ENCODE measurements at regions of chr5 and their contacts with region 1.

Region 1: GRCh38 chr5:139446956-139447779 is 7.8 kb upstream of the DNAJC18 start:
- DNase-seq: no peak
- ATAC-seq: no peak
- H3K4me3 Mint-ChIP-seq: no peak overlapping the region
- H3K27ac Mint-ChIP-seq: peak overlapping the region in 3 of 10 donors; percentile 11 to 86 (median 27)
- H3K4me1 Mint-ChIP-seq: peaks cover 16 to 42% (median 30%) of the 10 kb centered on the region in 4 donors
- H3K27me3 Mint-ChIP-seq: no peaks in the 10 kb centered on the region

Region 2: DNA sequence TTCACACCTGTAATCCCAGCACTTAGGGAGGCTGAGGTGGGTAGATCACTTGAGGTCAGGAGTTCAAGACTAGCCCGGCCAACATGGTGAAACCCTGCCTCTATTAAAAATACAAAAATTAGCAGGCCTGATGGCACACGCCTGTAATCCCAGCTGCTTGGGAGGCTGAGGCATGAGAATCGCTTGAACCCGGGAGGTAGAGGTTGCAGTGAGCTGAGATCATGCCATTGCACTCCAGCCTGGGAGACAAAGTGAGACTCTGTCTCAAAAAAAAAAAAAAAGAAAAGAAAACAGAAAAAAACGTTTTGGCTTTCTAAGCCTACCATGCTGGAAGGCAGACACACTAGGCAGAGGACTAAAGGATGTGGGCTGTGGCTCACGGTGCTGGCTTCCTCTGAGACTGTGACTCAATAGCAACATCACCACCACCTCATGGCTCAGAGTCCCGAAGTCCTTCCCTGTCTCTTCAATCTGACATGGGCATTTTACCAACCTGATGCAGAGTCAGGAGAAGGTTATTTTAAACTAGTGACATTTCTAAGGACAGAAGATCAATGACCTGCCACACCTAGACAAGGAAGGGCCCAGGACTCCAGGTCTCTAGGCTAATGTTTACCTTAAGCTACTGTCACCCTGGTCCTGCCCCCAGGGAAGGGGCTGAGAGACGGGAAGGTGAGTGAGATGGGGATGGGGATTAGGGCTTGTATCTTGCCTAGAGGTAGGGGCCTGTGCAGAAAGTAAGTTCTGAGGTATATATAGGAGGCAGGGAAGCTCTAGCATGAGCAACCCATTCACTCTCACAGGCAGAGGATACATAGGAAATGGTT is 11.6 kb after region 1 on chr5:
- POLR2A ChIA-PET with region 1: interaction called, 15 read pairs
- DNase-seq: peak; percentile 49 to 90 (median 76)
- ATAC-seq: peak; percentile 98 to 99
- H3K4me3 Mint-ChIP-seq: peak overlapping the region; percentile 16 to 70 (median 64)
- H3K27ac Mint-ChIP-seq: peak overlapping the region; percentile 90 to 97 (median 94)
- H3K4me1 Mint-ChIP-seq: peaks cover 34 to 75% (median 57%) of the 10 kb centered on the region in 4 donors
- H3K27me3 Mint-ChIP-seq: no peaks in the 10 kb centered on the region